ENCODE measurements at regions of chr1 and their contacts with region 1.

Region 1: GRCh38 chr1:59032228-59032627 is 248.4 kb upstream of the JUN start:
- DNase-seq: no peak
- H3K4me3 ChIP-seq: no peak overlapping the region
- H3K27ac ChIP-seq: no peak overlapping the region
- H3K4me1 ChIP-seq: peaks cover 0 to 11% (median 4%) of the 10 kb centered on the region in 4 donors
- H3K27me3 ChIP-seq: no peaks in the 10 kb centered on the region
- CTCF ChIP-seq: no peak
- EP300 ChIP-seq: no peak
- POLR2A ChIP-seq: no peak

Region 2: GRCh38 chr1:59263111-59263510 is 230.9 kb after region 1 on chr1:
- in situ Hi-C with region 1: no loop called
- intact Hi-C with region 1: loop called (anchors 2 kb)
- DNase-seq: no peak
- H3K4me3 ChIP-seq: no peak overlapping the region
- H3K27ac ChIP-seq: no peak overlapping the region
- H3K4me1 ChIP-seq: no peaks in the 10 kb centered on the region
- H3K27me3 ChIP-seq: no peaks in the 10 kb centered on the region
- CTCF ChIP-seq: no peak
- EP300 ChIP-seq: no peak
- POLR2A ChIP-seq: no peak

Measured in transverse colon (tissue), 4 donors.